Dorsolateral prefrontal cortex (tissue), 120 donors: ENCODE measurements at regions of chr9 and their contacts with region 1.

Region 1: DNA sequence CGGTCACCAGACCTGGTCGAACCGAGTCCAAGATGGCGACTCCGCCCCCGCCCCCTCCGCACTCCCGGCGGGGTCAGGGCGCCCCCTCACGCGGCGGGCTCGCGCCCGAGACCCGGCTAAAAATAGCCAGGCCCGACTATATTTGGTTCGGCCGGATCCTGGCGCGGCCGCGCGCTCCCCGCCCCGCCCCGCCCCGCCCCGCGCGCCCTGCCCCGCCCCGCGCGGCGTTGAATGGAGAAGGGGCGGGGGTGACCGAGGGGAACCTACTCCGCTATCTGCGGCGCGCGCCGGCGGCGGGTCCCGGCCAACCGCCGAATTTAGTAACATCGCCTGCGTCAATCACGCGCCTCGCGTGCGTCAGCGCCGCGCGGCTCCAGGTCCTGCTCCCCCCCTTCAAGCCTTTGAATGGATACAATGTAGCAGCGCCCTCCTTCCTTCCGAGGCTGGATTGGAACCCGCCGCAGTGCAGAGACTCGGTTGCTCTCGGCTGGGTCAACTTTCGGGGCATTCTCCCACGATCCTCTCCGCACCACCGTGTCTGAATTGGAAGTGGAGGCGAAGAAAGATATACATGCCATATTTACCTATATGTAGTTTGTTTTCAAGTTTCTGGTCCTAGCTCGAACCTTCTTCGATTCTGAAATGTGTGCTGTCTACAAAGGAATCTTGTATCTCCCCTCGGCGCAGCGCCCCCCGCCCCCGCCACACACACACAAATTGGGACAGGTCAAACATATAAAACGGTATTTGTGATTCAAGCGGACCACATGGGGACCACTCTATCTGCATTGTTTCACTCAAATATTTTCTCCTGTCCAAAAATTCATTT is 1.6 kb upstream of the NR4A3 start:
- DNase-seq: peak; percentile 82 to 93 (median 91)
- H3K4me3 ChIP-seq: peak overlapping the region; percentile 67 to 100 (median 91)
- H3K27ac ChIP-seq: peak overlapping the region; percentile 84 to 100 (median 99)
- H3K27me3 ChIP-seq: peaks cover 0 to 5% (median 0%) of the 10 kb centered on the region in 45 donors
- CTCF ChIP-seq: peak in 38 of 56 donors; percentile 3 to 56 (median 37)

Region 2: DNA sequence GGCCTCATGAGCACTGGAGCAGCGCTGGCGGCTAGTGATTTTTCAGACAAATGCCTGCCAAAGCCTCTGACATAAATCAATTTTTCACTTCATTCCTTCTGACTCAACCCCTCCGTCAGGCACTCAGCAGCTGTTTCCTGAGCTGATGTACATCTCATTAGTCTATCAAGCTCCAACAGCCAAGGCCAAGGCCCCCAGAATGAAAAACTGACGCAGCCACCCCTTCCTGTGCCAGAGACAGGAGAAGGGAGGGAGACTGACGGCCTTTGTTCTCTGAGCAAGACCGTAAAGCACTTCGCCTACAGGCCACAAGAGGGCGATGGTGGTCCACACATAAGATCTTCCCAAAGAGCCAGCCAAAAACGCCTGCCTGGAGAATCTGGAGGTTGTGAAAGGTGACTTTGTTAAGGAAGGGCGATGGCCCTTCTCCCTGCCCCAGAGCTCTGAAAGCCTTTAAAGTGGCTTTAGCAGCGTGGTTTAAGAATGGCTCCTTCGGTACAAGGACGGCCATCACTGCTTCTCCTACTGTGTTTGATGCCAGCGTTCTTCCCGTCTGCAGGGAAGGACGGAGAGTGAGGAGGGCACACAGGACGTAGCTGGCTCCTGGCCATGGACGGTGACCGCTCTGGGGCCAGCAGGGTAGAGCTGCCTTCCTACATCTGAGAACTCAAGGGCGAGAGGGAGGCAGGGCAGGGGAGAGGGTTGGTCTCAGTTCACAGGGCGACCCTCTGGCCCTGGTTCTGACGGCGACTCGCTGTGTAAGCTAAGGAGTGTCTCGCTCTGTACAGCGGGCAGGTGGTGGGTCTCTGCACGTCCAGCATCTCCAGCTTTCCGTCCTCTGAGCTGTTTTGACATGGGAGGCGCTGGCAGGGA is 635.4 kb before region 1 on chr9:
- intact Hi-C with region 1: loop called in 1 of 2 experiments (anchors 10 kb)
- DNase-seq: peak; percentile 85 to 94 (median 89)
- H3K4me3 ChIP-seq: peak overlapping the region; percentile 25 to 69 (median 49)
- H3K27ac ChIP-seq: peak overlapping the region in 10 of 59 donors; percentile 0 to 73 (median 40)
- H3K27me3 ChIP-seq: no peaks in the 10 kb centered on the region
- CTCF ChIP-seq: peak; percentile 75 to 99 (median 95)

Region 3: DNA sequence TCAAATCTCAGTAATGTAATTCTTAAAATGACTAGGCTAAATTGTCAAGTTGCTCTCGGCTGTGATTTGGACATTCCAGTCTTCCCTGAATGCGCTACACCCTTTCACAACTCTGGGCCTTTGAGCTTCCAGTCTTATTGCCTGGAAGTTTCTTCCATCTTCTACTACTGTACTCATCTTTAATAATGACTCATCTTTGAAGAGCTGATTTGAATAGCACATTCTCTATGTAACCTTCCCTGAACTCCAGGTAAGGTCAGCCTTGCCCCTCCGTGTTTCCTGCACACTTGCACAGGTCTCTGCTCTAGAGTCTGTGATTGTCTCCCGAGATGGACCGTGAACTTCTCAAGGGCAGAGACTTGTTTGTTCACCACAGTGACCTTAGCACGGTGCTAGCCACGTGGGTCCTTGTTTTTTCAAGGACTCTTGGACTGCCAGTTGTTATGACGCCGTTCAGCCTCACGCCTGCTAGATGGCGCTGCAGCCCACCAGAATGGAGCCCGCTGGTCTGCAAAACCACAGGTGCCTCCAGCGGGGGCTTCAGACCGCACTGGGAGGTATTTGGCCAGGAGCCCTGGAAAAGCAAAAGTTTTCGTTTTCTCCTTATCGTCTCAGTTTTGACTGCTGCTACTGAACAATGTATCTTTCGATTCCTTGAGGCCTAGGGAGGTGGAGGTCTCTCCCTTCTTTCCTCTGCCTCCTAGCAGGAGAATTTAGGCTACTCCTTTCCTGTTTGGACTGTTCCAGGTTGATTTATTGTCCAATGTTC is 553.6 kb before region 1 on chr9:
- intact Hi-C with region 1: loop called in 1 of 2 experiments (anchors 10 kb)
- DNase-seq: peak; percentile 64 to 83 (median 78)
- H3K4me3 ChIP-seq: peak overlapping the region in 26 of 59 donors; percentile 0 to 45 (median 24)
- H3K27ac ChIP-seq: no peak overlapping the region
- H3K27me3 ChIP-seq: no peaks in the 10 kb centered on the region
- CTCF ChIP-seq: peak; percentile 62 to 95 (median 88)

Region 4: GRCh38 chr9:100011062-100011681 is 191.1 kb after region 1 on chr9:
- intact Hi-C with region 1: loop called in 1 of 2 experiments (anchors 10 kb)
- DNase-seq: no peak
- H3K4me3 ChIP-seq: no peak overlapping the region
- H3K27ac ChIP-seq: no peak overlapping the region
- H3K27me3 ChIP-seq: no peaks in the 10 kb centered on the region
- CTCF ChIP-seq: peak in 54 of 56 donors; percentile 21 to 62 (median 40)

Region 5: DNA sequence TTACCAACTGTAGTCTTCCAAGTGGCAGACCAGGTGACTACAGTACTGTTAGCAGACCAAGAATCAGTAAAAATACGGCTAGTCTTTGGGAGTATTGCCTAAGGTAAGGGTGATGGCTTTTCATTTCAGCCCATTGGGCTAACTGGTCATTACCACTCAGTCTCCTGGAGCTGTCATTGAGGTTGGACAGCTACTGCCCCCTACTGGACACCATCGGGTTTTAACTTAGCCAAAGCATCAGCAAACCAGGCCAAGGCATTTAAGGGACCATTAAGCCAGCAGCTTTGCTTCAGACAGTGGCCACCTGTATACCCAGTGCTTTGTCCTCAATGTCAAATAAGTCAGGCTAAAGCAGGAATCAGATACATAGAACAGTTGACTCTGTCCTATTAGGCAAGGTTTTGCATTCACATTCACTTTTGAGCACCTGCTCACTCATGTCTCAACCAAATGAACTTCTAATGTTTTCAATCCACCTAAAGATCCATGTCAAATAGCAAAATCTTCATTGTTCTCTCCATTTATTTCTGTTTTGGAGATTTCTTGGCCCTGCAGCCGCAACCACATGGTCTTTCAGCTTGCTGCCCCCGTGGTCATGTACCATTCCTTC is 396.2 kb after region 1 on chr9:
- intact Hi-C with region 1: loop called in 1 of 2 experiments (anchors 10 kb)
- DNase-seq: peak in 3 of 10 donors; percentile 40 to 60 (median 49)
- H3K4me3 ChIP-seq: no peak overlapping the region
- H3K27ac ChIP-seq: no peak overlapping the region
- H3K27me3 ChIP-seq: no peaks in the 10 kb centered on the region
- CTCF ChIP-seq: peak; percentile 41 to 74 (median 61)